Activated naive CD4-positive, alpha-beta T cell treated with anti-CD3 and anti-CD28 coated beads for 36 hours (primary cell): ENCODE measurements at regions of chr1 and their contacts with region 1.

Region 1: DNA sequence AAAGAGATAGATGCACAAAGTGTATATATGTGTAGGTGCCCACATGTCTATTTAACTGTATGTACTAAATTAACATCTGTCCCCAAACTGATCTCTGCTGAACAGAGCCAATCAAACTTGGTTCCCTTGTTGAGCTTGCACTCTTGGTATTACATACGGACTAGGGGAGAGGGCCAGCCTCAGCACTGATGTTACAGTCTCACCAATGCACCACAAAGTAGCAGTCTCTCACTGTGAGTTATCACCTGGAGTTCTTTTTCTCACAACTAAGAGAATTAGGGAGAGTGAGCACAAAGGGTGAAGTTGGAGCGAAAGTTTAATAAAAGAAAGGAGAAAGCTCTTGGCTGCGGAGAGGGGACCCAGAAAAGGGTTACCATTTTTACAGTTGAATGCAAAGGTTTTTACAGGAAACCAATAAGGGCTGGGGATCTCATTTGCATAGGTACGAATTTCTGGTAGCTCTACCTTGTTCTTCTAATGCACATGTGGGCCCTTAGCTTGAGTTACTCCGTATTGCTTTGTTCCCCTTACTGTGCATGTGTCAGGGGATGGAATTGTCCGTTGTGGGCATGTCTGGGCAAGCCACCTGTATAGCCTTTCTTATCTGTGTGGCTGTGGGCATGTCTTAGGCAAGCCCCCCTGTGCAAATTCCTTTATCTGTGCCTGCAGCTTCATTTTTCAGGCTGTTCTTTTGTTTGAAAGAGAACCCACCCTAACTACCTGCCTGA is 13.3 kb upstream of the CHI3L2 start:
- DNase-seq: peak; percentile 58
- H3K4me3 Mint-ChIP-seq: peak overlapping the region; percentile 75
- H3K27ac Mint-ChIP-seq: peak overlapping the region; percentile 99
- H3K4me1 Mint-ChIP-seq: peaks cover 82% of the 10 kb centered on the region
- H3K27me3 Mint-ChIP-seq: no peaks in the 10 kb centered on the region

Region 2: GRCh38 chr1:110645821-110646735 is 568.2 kb before region 1 on chr1:
- CTCF ChIA-PET with region 1: no interaction called
- intact Hi-C with region 1: loop called (anchors 2 kb)
- DNase-seq: no peak
- H3K4me3 Mint-ChIP-seq: peak overlapping the region; percentile 28
- H3K27ac Mint-ChIP-seq: no peak overlapping the region
- H3K4me1 Mint-ChIP-seq: peaks cover 55% of the 10 kb centered on the region
- H3K27me3 Mint-ChIP-seq: no peaks in the 10 kb centered on the region

Region 3: GRCh38 chr1:111139956-111140679 is 74.1 kb before region 1 on chr1 and contains the starts of genes CEPT1 and DRAM2:
- CTCF ChIA-PET with region 1: interaction called, 7 read pairs
- intact Hi-C with region 1: loop called (anchors 1 kb)
- DNase-seq: peak; percentile 98
- H3K4me3 Mint-ChIP-seq: peak within 1 kb of the TSS; percentile 94
- H3K27ac Mint-ChIP-seq: peak within 1 kb of the TSS; percentile 91
- H3K4me1 Mint-ChIP-seq: peaks cover 49% of the 10 kb centered on the region
- H3K27me3 Mint-ChIP-seq: no peaks in the 10 kb centered on the region
- total RNA-seq, gene CEPT1: 29.0 to 30.3 TPM
- total RNA-seq, gene DRAM2: 27.7 to 31.1 TPM

Region 4: DNA sequence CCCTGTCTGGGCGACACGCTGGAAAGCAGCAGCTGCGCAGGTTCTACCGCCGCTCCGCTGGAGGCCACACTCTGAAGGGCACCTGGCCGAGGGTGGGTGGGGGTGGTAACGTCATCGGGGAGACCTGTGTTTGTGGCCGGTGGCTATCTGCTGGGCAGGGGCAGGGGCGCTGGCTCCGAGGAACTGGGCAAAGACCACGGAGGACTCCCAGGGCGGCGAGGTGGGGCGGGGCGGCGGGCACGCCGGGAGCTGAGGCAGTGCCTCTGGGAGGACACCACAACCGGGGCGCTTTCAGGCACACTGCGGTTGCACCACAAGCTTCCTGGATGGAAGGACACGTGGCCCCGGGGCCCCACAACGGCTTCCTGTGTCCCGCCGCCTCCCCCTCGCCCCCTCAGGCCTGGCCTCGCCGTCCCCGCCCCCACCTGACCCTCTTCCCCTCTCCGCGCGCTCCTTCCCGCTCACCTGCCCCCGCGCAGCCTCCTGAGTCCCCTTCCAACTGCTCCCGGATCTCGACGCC is 10.5 kb before region 1 on chr1:
- CTCF ChIA-PET with region 1: interaction called, 234 read pairs
- intact Hi-C with region 1: loop called (anchors 1 kb)
- DNase-seq: peak; percentile 94
- H3K4me3 Mint-ChIP-seq: peak overlapping the region; percentile 98
- H3K27ac Mint-ChIP-seq: peak overlapping the region; percentile 99
- H3K4me1 Mint-ChIP-seq: peaks cover 44% of the 10 kb centered on the region
- H3K27me3 Mint-ChIP-seq: no peaks in the 10 kb centered on the region

Region 5: GRCh38 chr1:111275079-111275478 is 60.8 kb after region 1 on chr1:
- CTCF ChIA-PET with region 1: interaction called, 3 read pairs
- intact Hi-C with region 1: loop called (anchors 1 kb)
- DNase-seq: peak; percentile 46
- H3K4me3 Mint-ChIP-seq: no peak overlapping the region
- H3K27ac Mint-ChIP-seq: peak overlapping the region; percentile 32
- H3K4me1 Mint-ChIP-seq: peaks cover 47% of the 10 kb centered on the region
- H3K27me3 Mint-ChIP-seq: peaks cover 22% of the 10 kb centered on the region

Region 6: DNA sequence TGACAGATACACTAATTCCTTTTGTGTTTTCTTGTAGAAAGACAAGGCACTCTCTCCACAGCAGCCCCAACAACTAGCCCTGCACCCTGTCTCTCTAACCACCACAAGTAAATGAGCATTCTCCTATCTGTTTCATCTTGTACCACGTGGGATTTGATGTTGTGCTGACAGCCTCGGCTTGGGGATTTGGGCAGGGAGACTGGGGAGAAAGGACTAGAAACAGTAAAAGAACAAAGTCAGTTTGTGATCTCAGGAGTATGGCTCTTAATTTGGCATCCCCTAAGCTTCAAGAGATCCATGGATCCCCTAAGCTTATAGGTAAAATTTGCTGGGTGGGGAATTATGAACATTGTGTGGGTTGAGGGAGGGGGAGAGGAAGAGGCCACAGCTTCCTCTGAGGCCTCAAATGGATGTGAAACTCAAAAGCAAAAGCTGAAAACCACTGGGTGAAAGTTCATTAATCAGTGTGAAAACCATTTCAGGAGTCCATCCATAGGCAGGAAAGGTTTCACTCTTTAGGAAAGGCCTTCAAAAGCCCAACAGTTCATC is 262.6 kb after region 1 on chr1:
- CTCF ChIA-PET with region 1: no interaction called
- intact Hi-C with region 1: no loop called
- DNase-seq: peak; percentile 50
- H3K4me3 Mint-ChIP-seq: peak overlapping the region; percentile 17
- H3K27ac Mint-ChIP-seq: peak overlapping the region; percentile 71
- H3K4me1 Mint-ChIP-seq: peaks cover 46% of the 10 kb centered on the region
- H3K27me3 Mint-ChIP-seq: no peaks in the 10 kb centered on the region

Region 7: GRCh38 chr1:111592389-111593361 is 378.4 kb after region 1 on chr1:
- CTCF ChIA-PET with region 1: no interaction called
- intact Hi-C with region 1: loop called (anchors 2 kb)
- DNase-seq: peak; percentile 96
- H3K4me3 Mint-ChIP-seq: peak overlapping the region; percentile 54
- H3K27ac Mint-ChIP-seq: peak overlapping the region; percentile 86
- H3K4me1 Mint-ChIP-seq: peaks cover 56% of the 10 kb centered on the region
- H3K27me3 Mint-ChIP-seq: no peaks in the 10 kb centered on the region